HepG2 (cell line): ENCODE measurements at regions of chr7 and their contacts with region 1.

Region 1: DNA sequence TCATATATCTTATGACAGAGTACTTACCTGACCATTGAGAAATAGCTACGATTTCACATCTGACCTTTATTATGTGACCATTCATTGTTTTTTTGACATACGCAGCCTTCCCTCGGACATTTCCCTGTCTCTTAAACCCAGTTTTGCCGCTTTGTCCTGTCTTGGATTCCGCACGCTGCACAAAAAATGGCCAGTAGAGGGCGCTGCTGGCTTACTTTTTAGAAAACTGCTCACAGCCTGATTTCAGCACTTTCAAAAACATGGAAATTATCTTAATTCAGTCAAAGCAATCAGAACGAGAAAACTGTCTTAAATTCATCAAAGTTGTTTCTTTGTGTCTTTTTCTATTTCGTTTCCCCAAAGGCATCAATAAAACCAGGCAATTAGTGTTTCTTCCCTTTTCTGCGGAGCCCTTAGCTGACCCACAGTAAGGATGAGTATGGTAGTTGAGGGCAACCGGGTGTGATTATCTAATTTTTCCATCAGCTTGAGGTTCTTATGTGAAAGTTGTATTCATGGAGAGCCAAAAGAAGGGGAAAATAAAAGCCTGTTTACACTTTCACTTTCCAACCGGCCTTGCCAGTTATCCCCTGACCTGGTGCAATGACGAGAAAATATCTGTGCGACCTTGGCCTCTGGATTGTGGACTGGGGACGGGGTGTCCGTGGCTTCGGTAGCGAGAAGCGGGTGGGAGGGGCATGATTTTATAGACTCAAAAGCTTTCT is 144.4 kb downstream of the DYNC1I1 start:
- DNase-seq: peak; percentile 52
- ATAC-seq: peak; percentile 94
- H3K4me3 ChIP-seq: peak overlapping the region; percentile 48 to 67 (median 62)
- H3K27ac ChIP-seq: no peak overlapping the region
- H3K4me1 ChIP-seq: peaks cover 13% of the 10 kb centered on the region
- H3K27me3 ChIP-seq: 0 out of 5 replicates have a peak, but pooled peaks cover 0 to 7% of the 10 kb centered on the region in 2 experiments
- CTCF ChIP-seq: peak; percentile 84
- EP300 ChIP-seq: no peak
- POLR2A ChIP-seq: no peak
- RAD21 ChIP-seq: peak; percentile 71

Region 2: GRCh38 chr7:96075510-96076349 is 159.0 kb after region 1 on chr7:
- CTCF ChIA-PET with region 1: no interaction called
- POLR2A ChIA-PET with region 1: no interaction called
- in situ Hi-C with region 1: loop called (anchors 10 kb)
- intact Hi-C with region 1: loop called (anchors 1 kb)
- DNase-seq: peak; percentile 55
- ATAC-seq: peak; percentile 99
- H3K4me3 ChIP-seq: peak overlapping the region; percentile 53 to 56 (median 56)
- H3K27ac ChIP-seq: no peak overlapping the region
- H3K4me1 ChIP-seq: peaks cover 7% of the 10 kb centered on the region
- H3K27me3 ChIP-seq: peaks cover 3 to 14% of the 10 kb centered on the region in 2 experiments; a peak in 3 of 5 replicates
- CTCF ChIP-seq: peak; percentile 91
- EP300 ChIP-seq: no peak
- POLR2A ChIP-seq: no peak
- RAD21 ChIP-seq: peak; percentile 90

Region 3: DNA sequence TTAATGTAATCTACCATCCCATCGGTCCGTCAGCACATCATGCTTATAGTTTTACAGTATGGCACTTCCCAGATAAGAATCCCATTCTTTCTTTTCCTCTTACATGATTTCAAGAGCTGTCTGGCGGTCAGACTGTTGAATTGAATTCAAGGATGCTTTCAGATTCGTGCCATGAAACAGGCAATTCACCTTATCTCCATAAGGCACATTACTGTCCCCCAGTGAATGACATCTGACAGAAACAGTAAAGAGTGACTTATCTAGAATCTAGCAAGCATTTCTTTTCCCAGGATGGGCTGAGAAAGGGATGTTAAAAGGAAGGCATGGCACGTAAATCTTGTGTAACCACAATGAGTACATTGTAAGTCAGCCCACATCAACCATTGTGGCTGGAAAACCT is 854.0 kb after region 1 on chr7:
- CTCF ChIA-PET with region 1: no interaction called
- POLR2A ChIA-PET with region 1: no interaction called
- in situ Hi-C with region 1: loop called (anchors 25 kb)
- intact Hi-C with region 1: no loop called
- DNase-seq: no peak
- ATAC-seq: no peak
- H3K4me3 ChIP-seq: no peak overlapping the region
- H3K27ac ChIP-seq: no peak overlapping the region
- H3K4me1 ChIP-seq: no peaks in the 10 kb centered on the region
- H3K27me3 ChIP-seq: no peaks in the 10 kb centered on the region
- CTCF ChIP-seq: no peak
- EP300 ChIP-seq: no peak
- POLR2A ChIP-seq: no peak
- RAD21 ChIP-seq: no peak

Region 4: DNA sequence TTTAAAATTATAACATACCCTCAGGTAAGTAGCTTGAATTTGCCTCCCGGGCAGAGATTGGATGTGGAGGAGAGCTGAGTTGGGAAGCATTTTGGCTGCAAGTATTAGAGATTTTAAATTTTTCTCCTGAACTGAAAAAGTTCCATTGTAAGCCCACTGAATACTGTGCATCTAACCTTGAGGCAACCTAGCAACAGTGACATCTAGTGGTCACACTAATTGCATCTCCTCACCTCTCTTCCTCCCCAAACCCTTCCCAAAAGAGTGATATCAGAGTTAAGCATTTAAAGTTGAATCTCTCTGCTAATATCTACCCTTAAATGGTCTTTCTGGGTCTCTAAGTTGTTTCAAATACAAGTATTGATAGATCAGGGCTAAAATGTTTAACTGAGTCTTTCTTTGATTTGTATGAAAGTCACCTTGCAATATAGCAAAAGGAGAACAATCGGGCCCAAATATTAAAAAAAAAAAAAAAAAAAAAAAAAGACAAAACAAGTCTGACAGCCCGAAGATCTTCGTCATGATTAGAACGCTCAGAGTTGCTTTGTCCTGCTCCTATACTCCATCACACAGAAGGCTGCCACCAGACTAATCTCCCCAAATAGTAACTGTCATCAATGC is 1148.3 kb after region 1 on chr7:
- CTCF ChIA-PET with region 1: interaction called, 8 read pairs
- POLR2A ChIA-PET with region 1: no interaction called
- in situ Hi-C with region 1: no loop called
- intact Hi-C with region 1: loop called (anchors 1 kb)
- DNase-seq: peak; percentile 36
- ATAC-seq: peak; percentile 92
- H3K4me3 ChIP-seq: no peak overlapping the region
- H3K27ac ChIP-seq: no peak overlapping the region
- H3K4me1 ChIP-seq: no peaks in the 10 kb centered on the region
- H3K27me3 ChIP-seq: no peaks in the 10 kb centered on the region
- CTCF ChIP-seq: peak; percentile 74
- EP300 ChIP-seq: no peak
- POLR2A ChIP-seq: no peak
- RAD21 ChIP-seq: peak; percentile 35; the same call in 1 of the 2 replicates

Region 5: GRCh38 chr7:97179454-97180104 is 1262.8 kb after region 1 on chr7:
- CTCF ChIA-PET with region 1: no interaction called
- POLR2A ChIA-PET with region 1: no interaction called
- in situ Hi-C with region 1: no loop called
- intact Hi-C with region 1: loop called (anchors 10 kb)
- DNase-seq: peak; percentile 70
- ATAC-seq: peak; percentile 76
- H3K4me3 ChIP-seq: no peak overlapping the region
- H3K27ac ChIP-seq: no peak overlapping the region
- H3K4me1 ChIP-seq: no peaks in the 10 kb centered on the region
- H3K27me3 ChIP-seq: no peaks in the 10 kb centered on the region
- CTCF ChIP-seq: peak; percentile 74
- EP300 ChIP-seq: no peak
- POLR2A ChIP-seq: no peak
- RAD21 ChIP-seq: no peak

Region 6: GRCh38 chr7:97835296-97836138 is 1918.8 kb after region 1 on chr7:
- CTCF ChIA-PET with region 1: interaction called, 4 read pairs
- POLR2A ChIA-PET with region 1: no interaction called
- in situ Hi-C with region 1: loop called (anchors 25 kb)
- intact Hi-C with region 1: loop called (anchors 2 kb)
- DNase-seq: peak; percentile 53
- ATAC-seq: peak; percentile 88
- H3K4me3 ChIP-seq: no peak overlapping the region
- H3K27ac ChIP-seq: no peak overlapping the region
- H3K4me1 ChIP-seq: no peaks in the 10 kb centered on the region
- H3K27me3 ChIP-seq: no peaks in the 10 kb centered on the region; a peak in 2 of 5 replicates
- CTCF ChIP-seq: peak; percentile 77
- EP300 ChIP-seq: no peak
- POLR2A ChIP-seq: no peak
- RAD21 ChIP-seq: peak; percentile 16; the same call in 1 of the 2 replicates